H1 (cell line): ENCODE measurements at regions of chr2 and their contacts with region 1.

Region 1: GRCh38 chr2:128727914-128728313 is 409.2 kb upstream of the HS6ST1 start:
- DNase-seq: no peak
- H3K4me3 ChIP-seq: no peak overlapping the region
- H3K27ac ChIP-seq: no peak overlapping the region
- H3K4me1 ChIP-seq: no peaks in the 10 kb centered on the region
- H3K27me3 ChIP-seq: no peaks in the 10 kb centered on the region
- CTCF ChIP-seq: no peak
- EP300 ChIP-seq: no peak
- POLR2A ChIP-seq: no peak
- RAD21 ChIP-seq: no peak

Region 2: GRCh38 chr2:128714851-128715312 is 13.0 kb before region 1 on chr2:
- CTCF ChIA-PET with region 1: interaction called, 23 read pairs
- POLR2A ChIA-PET with region 1: interaction called, 5 read pairs
- DNase-seq: peak in 1 of 2 experiments; percentile 54
- H3K4me3 ChIP-seq: no peak overlapping the region
- H3K27ac ChIP-seq: no peak overlapping the region
- H3K4me1 ChIP-seq: no peaks in the 10 kb centered on the region
- H3K27me3 ChIP-seq: no peaks in the 10 kb centered on the region
- CTCF ChIP-seq: peak; percentile 57 to 61 (median 60)
- EP300 ChIP-seq: no peak
- POLR2A ChIP-seq: no peak
- RAD21 ChIP-seq: peak; percentile 45 to 63